Sigmoid colon (tissue), 7 donors: ENCODE measurements at regions of chr22 and their contacts with region 1.

Region 1: DNA sequence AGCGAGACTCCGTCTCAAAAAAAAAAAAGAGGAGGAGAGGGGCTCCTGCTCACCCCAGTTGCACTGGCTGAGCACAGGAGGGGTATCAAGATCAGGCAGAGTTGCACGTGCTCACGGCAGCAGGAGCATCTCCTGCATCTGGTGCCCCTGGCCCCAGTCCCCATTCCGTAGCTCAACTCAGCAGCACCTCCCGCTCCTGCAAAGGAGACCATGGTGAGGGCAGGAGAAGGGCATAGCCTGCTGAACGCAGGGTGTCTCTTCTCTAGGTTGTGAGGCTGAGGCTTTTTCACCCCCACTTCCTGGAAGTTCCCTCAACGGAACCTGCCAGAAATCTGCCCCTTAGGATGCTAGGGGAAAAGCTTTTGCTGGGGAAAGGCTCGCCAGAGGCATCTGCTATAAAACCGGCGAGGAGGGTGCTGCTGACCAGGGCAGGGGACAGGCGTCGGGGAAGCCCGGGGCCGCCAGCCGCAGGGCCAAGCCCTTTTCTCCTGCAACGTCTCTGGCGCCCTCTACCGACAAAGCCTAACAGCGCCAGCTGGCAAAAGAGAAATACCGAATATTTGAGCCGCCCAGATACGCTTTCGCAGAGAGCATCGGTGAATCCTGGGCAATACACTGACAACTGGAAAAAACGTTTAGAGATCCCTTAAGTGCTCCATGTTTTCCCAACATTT is 1.0 kb upstream of the PPP6R2 start:
- DNase-seq: peak; percentile 95
- H3K4me3 ChIP-seq: peak overlapping the region; percentile 32 to 99 (median 92)
- H3K27ac ChIP-seq: peak overlapping the region; percentile 75 to 89 (median 82)
- H3K4me1 ChIP-seq: peaks cover 0 to 21% (median 17%) of the 10 kb centered on the region in 4 donors
- H3K27me3 ChIP-seq: no peaks in the 10 kb centered on the region
- CTCF ChIP-seq: peak; percentile 90 to 97 (median 96)
- EP300 ChIP-seq: no peak
- POLR2A ChIP-seq: no peak

Region 2: DNA sequence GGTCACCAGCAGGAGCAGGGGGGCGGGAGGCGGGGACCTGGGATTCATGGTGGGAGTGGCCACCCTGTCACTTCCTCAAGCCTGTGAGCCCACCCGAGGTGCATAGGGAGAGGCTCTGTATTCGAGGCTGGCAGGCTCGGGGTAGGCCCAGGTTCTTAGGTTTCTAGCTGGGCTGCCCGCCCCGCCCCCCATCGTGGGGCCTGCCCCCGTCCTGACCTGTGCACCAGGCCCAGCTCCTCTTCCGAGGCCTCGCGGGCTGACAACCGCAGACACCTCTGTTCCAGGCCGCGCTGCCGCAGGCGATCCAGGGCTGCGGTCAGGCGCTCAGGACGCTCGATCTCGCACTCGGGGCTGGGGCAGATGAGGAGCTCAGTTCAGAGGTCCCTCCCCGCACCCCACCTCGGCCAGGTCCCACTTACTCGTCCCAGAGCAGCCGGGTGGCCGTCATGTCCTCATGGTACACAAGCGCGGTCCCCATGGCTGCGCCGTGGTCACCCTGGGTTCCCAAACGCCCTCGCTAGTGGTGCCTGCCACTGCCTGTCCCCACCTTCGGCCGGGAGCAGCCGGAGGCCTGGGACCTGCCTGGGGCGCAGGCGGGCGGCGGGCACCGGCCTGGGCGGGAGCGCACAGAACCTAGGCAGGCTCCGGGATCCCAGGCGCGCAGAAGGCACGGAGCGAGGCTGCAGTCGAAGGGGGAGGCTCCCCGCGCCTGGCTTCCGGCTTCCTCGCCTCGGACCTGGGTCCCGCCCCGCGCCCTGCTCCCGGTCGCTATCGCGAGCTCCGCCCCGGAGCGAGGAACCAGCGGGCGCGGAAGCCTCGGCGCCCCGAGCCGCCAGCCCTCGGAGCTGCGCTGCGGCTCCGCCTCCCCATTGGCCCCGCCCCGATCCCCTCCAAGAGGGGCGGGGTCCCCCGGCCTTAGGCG is 91.3 kb before region 1 on chr22 and contains the start of gene HDAC10:
- intact Hi-C with region 1: loop called (anchors 1 kb)
- DNase-seq: peak; percentile 88
- H3K4me3 ChIP-seq: peak within 1 kb of the TSS; percentile 47 to 82 (median 68)
- H3K27ac ChIP-seq: peak within 1 kb of the TSS; percentile 75 to 82 (median 81)
- H3K4me1 ChIP-seq: peaks cover 0 to 48% (median 32%) of the 10 kb centered on the region in 4 donors
- H3K27me3 ChIP-seq: no peaks in the 10 kb centered on the region
- CTCF ChIP-seq: no peak
- EP300 ChIP-seq: no peak
- POLR2A ChIP-seq: no peak
- total RNA-seq, gene HDAC10: 7.2 to 47.4 (median 14.9) TPM

Region 3: DNA sequence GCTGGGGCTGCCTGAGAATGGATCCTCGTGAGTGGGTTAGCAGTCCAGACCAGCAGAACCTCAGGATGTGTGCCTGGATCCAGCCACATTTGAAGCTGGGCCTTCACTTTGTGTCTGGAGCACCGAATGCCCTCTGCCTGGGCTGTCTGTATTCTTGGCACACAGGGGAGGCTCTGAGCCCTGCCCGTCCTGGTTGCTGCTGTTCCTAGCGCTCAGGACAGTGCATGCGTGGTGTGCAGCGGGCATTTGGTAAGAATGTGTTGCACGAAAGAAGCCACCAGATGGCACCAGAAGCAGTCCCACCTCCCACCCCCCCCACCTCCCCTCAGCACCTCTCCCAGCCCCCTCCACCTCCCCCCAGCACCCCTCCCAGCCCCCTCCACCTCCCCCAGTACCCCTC is 67.8 kb before region 1 on chr22:
- intact Hi-C with region 1: loop called (anchors 2 kb)
- DNase-seq: no peak
- H3K4me3 ChIP-seq: no peak overlapping the region
- H3K27ac ChIP-seq: no peak overlapping the region
- H3K4me1 ChIP-seq: peaks cover 0 to 36% (median 34%) of the 10 kb centered on the region in 4 donors
- H3K27me3 ChIP-seq: peaks cover 4 to 27% (median 23%) of the 10 kb centered on the region in 3 donors
- CTCF ChIP-seq: peak in 1 of 4 experiments; percentile 31
- EP300 ChIP-seq: no peak
- POLR2A ChIP-seq: no peak

Region 4: GRCh38 chr22:50289942-50290630 is 52.0 kb before region 1 on chr22:
- intact Hi-C with region 1: no loop called
- DNase-seq: no peak
- H3K4me3 ChIP-seq: no peak overlapping the region
- H3K27ac ChIP-seq: no peak overlapping the region
- H3K4me1 ChIP-seq: peaks cover 0 to 34% (median 31%) of the 10 kb centered on the region in 4 donors
- H3K27me3 ChIP-seq: no peaks in the 10 kb centered on the region
- CTCF ChIP-seq: no peak
- EP300 ChIP-seq: no peak
- POLR2A ChIP-seq: no peak

Region 5: DNA sequence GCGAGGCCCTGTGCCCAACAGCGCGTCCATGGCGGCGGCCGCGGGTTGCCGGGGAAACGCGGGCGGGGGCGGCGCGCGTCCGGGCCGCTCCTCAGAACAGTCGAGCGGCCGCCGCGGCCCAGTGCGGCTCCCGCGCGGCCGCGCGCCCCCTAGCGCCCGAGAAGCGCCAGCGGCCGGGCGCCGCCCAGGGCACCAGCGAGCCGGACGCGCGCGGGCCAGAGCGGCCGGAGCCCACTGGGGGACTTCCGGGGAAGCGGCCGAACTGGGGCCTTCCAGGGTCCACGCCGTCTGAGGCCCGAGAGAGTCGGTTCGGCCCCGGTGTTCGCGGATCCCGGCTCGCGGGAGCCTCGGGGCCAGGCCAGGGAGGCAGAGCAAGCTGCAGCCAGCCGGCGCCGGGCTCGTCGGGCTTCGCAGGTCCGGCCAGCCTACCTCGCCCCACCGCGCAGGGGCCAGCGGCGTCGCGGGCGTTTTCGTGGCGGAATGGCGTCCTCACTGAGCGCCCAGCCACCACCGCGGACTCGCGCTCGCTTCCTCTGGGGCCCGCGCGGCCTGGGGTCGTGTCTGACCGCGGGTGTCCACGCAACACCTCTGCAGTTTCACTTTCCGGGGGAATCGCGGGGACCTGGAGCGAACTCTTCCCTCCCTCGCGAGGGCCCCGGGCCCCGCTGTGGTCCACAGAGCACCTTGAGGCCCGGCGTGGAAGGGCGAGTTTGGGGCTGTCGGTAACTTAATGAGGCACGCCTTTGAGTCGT is 15.0 kb before region 1 on chr22 and contains the start of gene DENND6B:
- intact Hi-C with region 1: loop called (anchors 2 kb)
- DNase-seq: peak; percentile 88
- H3K4me3 ChIP-seq: peak within 1 kb of the TSS; percentile 63 to 81 (median 70)
- H3K27ac ChIP-seq: peak within 1 kb of the TSS; percentile 89 to 96 (median 93)
- H3K4me1 ChIP-seq: peaks cover 0 to 18% (median 16%) of the 10 kb centered on the region in 4 donors
- H3K27me3 ChIP-seq: no peaks in the 10 kb centered on the region
- CTCF ChIP-seq: peak in 2 of 4 experiments; percentile 35 to 40
- EP300 ChIP-seq: no peak
- POLR2A ChIP-seq: no peak
- total RNA-seq, gene DENND6B: 2.1 to 7.2 (median 2.8) TPM

Region 6: GRCh38 chr22:50507991-50508884 is 166.1 kb after region 1 on chr22 and contains the start of gene NCAPH2:
- intact Hi-C with region 1: loop called (anchors 5 kb)
- DNase-seq: peak; percentile 98
- H3K4me3 ChIP-seq: peak within 1 kb of the TSS; percentile 83 to 97 (median 96)
- H3K27ac ChIP-seq: peak within 1 kb of the TSS; percentile 91 to 98 (median 94)
- H3K4me1 ChIP-seq: peaks cover 0 to 39% (median 24%) of the 10 kb centered on the region in 4 donors
- H3K27me3 ChIP-seq: no peaks in the 10 kb centered on the region
- CTCF ChIP-seq: no peak
- EP300 ChIP-seq: no peak
- POLR2A ChIP-seq: peak; percentile 41 to 70
- total RNA-seq, gene NCAPH2: 30.7 to 54.0 (median 35.6) TPM